ENCODE measurements at regions of chrX and their contacts with region 1.

Region 1: GRCh38 chrX:15854712-15855567 is at the start of gene AP1S2:
- DNase-seq: peak; percentile 95 to 97
- ATAC-seq: peak; percentile 96 to 99 (median 97)
- H3K4me3 ChIP-seq: peak within 1 kb of the TSS; percentile 81
- H3K27ac ChIP-seq: peak within 1 kb of the TSS; percentile 92
- H3K4me1 ChIP-seq: peaks cover 15% of the 10 kb centered on the region
- H3K27me3 ChIP-seq: peaks cover 0 to 20% (median 0%) of the 10 kb centered on the region in 3 donors
- CTCF ChIP-seq: no peak
- total RNA-seq, gene AP1S2: 80.4 to 162 (median 120) TPM

Region 2: DNA sequence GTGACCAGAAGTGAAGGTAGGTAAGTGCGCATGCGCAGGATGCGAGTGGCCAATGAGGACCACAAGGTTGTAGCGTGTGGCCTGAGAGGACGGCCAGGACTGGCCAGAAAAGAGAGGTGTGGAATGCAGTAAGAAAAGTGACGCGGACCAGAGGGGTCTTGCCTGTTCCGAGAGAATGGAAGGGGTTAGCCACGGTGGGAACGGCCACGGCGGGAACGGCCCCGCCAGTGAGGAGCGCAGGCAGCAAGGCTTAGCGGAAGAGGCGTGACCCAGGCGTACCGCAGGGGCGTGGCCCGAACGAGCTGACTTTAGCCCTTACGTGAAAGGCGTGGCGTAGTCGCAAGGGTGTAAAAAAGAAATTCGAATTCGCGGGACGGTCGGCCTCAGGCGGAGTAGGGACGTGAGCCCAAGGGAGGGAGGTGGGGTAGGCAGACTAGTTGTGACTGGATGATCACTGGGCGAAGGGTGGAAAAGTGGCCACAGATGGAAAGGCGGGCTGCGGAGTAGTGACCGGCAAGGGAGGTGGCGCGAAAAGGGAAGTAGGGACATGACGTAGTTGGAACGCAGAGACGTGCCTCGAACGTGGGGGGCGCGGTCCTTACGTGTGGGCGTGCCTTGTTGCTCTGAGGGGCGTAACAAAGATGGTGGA is 180.0 kb before region 1 on chrX:
- intact Hi-C with region 1: loop called in 1 of 2 experiments (anchors 5 kb)
- DNase-seq: peak; percentile 96 to 97
- ATAC-seq: peak; percentile 93 to 96 (median 94)
- H3K4me3 ChIP-seq: peak overlapping the region; percentile 82
- H3K27ac ChIP-seq: peak overlapping the region; percentile 97
- H3K4me1 ChIP-seq: peaks cover 14% of the 10 kb centered on the region
- H3K27me3 ChIP-seq: peaks cover 0 to 4% (median 0%) of the 10 kb centered on the region in 3 donors
- CTCF ChIP-seq: no peak

Region 3: GRCh38 chrX:15686818-15687685 is 167.9 kb before region 1 on chrX:
- intact Hi-C with region 1: loop called in 1 of 2 experiments (anchors 5 kb)
- DNase-seq: no peak
- ATAC-seq: peak; percentile 67 to 97 (median 91)
- H3K4me3 ChIP-seq: no peak overlapping the region
- H3K27ac ChIP-seq: no peak overlapping the region
- H3K4me1 ChIP-seq: no peaks in the 10 kb centered on the region
- H3K27me3 ChIP-seq: no peaks in the 10 kb centered on the region
- CTCF ChIP-seq: peak; percentile 73

Region 4: DNA sequence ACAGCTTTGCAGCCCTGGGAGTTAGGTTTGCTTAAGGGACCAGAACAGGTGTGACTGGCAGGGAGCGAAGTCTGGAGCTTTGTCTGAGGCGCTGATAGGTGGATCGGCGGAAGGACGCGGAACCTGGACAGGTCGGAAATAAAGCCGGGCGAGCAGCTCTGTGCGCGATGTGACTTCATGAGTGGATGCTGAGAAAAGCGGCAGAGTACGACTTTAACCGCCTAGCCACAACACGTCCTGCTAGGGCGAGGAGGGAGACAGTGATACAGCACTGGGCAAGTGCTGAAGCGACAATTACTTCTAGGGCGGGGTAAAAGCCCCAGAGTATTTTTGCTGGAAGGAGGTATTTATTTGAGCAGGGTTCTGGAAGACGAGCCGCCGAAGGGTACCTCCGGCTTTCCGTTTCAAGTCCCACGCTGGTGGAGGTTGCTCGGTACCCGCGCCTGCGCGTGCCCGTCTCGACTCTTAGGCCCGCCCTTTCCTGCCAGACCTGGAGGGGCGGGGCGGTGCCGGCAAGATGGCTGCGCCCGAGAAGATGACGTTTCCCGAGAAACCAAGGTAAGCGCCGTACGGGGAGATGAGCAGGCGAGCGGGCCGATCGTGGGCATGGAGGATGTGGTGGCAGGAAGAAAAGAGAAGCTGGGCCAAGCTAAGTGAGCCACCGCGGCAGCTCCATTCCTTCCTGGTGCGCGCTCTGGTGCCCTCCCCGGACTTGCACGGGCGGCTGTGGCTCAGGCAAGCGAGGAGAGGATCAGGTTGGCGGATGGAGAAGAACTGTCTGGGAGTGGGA is 64.8 kb before region 1 on chrX and contains the start of gene ZRSR2:
- intact Hi-C with region 1: loop called in 1 of 2 experiments (anchors 2 kb)
- DNase-seq: peak; percentile 87 to 90
- ATAC-seq: peak; percentile 96 to 99 (median 98)
- H3K4me3 ChIP-seq: peak within 1 kb of the TSS; percentile 86
- H3K27ac ChIP-seq: peak within 1 kb of the TSS; percentile 68
- H3K4me1 ChIP-seq: peaks cover 10% of the 10 kb centered on the region
- H3K27me3 ChIP-seq: no peaks in the 10 kb centered on the region
- CTCF ChIP-seq: no peak
- total RNA-seq, gene ZRSR2: 7.4 to 12.7 (median 8.9) TPM

Region 5: DNA sequence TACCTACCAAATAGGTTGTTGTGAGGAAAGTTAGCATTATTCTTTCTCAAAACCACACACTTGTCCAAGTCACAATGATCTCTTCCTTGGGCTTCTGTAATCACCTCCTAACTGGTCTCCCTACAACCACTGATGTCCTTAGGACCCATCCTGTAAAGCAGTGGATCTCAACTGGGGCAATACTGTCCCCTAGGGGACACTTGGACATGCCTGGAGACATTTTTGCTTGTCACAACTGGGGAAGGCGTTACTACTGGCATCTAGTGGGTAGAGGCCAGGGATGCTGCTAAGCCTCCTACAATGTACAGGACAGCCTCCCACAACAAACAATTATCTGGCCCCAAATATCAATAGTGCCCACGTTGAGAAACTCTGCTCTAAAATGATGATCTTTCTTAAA is 118.4 kb after region 1 on chrX:
- intact Hi-C with region 1: loop called in 1 of 2 experiments (anchors 5 kb)
- DNase-seq: no peak
- ATAC-seq: peak; percentile 74 to 87 (median 84)
- H3K4me3 ChIP-seq: no peak overlapping the region
- H3K27ac ChIP-seq: no peak overlapping the region
- H3K4me1 ChIP-seq: no peaks in the 10 kb centered on the region
- H3K27me3 ChIP-seq: peaks cover 0 to 3% (median 0%) of the 10 kb centered on the region in 3 donors
- CTCF ChIP-seq: peak; percentile 50

Region 6: GRCh38 chrX:16719334-16720084 is 864.6 kb after region 1 on chrX and contains the start of gene SYAP1:
- intact Hi-C with region 1: loop called in 1 of 2 experiments (anchors 10 kb)
- DNase-seq: peak; percentile 97 to 99
- ATAC-seq: peak; percentile 95 to 97 (median 97)
- H3K4me3 ChIP-seq: peak within 1 kb of the TSS; percentile 75
- H3K27ac ChIP-seq: peak within 1 kb of the TSS; percentile 91
- H3K4me1 ChIP-seq: peaks cover 13% of the 10 kb centered on the region
- H3K27me3 ChIP-seq: peaks cover 0 to under 1% (median 0%) of the 10 kb centered on the region in 3 donors
- CTCF ChIP-seq: no peak
- total RNA-seq, gene SYAP1: 13.7 to 29.4 (median 20.0) TPM